Psoas muscle (tissue), 8 donors: ENCODE measurements at regions of chr7 and their contacts with region 1.

Region 1: GRCh38 chr7:92833024-92833765 is 3.2 kb downstream of the CDK6 start:
- DNase-seq: peak; percentile 79 to 86
- ATAC-seq: peak; percentile 72 to 79 (median 74)
- H3K4me3 ChIP-seq: peak overlapping the region; percentile 81
- H3K27ac ChIP-seq: peak overlapping the region; percentile 74
- H3K4me1 ChIP-seq: peaks cover 15% of the 10 kb centered on the region
- H3K27me3 ChIP-seq: peaks cover 0 to 64% (median 16%) of the 10 kb centered on the region in 3 donors
- CTCF ChIP-seq: peak; percentile 58

Region 2: GRCh38 chr7:92366730-92367129 is 466.5 kb before region 1 on chr7:
- intact Hi-C with region 1: no loop called
- DNase-seq: no peak
- ATAC-seq: no peak
- H3K4me3 ChIP-seq: no peak overlapping the region
- H3K27ac ChIP-seq: no peak overlapping the region
- H3K4me1 ChIP-seq: no peaks in the 10 kb centered on the region
- H3K27me3 ChIP-seq: no peaks in the 10 kb centered on the region
- CTCF ChIP-seq: no peak

Region 3: GRCh38 chr7:92614660-92615174 is 218.5 kb before region 1 on chr7:
- intact Hi-C with region 1: loop called in 1 of 2 experiments (anchors 5 kb)
- DNase-seq: no peak
- ATAC-seq: no peak
- H3K4me3 ChIP-seq: no peak overlapping the region
- H3K27ac ChIP-seq: no peak overlapping the region
- H3K4me1 ChIP-seq: no peaks in the 10 kb centered on the region
- H3K27me3 ChIP-seq: no peaks in the 10 kb centered on the region
- CTCF ChIP-seq: no peak

Region 4: GRCh38 chr7:92621026-92621540 is 212.1 kb before region 1 on chr7:
- intact Hi-C with region 1: loop called (anchors 5 kb)
- DNase-seq: peak; percentile 27 to 52
- ATAC-seq: peak; percentile 39 to 85 (median 70)
- H3K4me3 ChIP-seq: no peak overlapping the region
- H3K27ac ChIP-seq: peak overlapping the region; percentile 1
- H3K4me1 ChIP-seq: no peaks in the 10 kb centered on the region
- H3K27me3 ChIP-seq: no peaks in the 10 kb centered on the region
- CTCF ChIP-seq: peak; percentile 57

Region 5: DNA sequence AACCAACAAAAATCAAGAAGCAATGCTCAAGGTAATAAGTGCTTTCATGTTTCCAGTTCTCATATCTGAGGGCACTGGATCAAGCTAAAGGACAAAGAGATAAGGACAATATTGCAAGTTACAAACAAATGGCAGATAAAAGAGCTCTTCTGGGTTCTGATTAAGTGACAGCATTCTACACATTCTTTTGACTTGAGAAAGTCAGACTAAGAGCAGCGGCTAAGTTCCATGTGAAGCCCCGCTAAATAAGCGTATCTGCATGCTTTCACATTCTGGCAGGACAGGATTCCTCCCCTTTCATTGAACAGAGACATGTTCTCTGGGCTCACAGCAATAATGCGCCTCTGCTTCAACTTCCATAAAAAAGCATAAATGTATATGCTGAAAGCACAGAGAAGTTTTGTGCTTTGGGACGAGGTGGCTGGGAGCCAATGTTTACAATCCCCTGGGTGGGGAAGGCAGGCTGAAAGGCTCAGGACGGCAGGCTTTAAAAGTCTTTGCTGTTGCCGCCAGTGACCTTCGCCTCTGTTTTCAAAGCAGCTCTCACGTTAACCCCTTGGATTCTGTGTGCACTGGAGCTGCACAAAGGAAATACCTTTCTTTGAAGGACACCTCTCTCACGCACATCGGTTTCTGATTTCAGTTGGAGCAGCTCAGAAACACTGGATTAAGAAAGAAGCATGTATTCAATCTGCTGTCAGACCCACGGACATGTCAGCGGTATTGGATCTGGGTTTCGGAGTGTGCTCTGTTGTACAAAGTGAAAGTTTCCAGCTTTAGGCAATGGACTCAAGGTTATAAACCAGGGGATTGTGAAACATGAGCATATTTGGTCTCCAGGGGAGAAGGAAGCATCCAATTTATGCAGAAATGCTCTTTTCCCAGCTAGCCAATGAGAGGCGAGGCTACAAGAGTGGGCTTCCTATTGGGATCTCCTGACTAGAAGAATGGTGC is 137.6 kb before region 1 on chr7:
- intact Hi-C with region 1: loop called in 1 of 2 experiments (anchors 1 kb)
- DNase-seq: peak in 1 of 2 donors; percentile 13
- ATAC-seq: peak; percentile 23 to 60 (median 44)
- H3K4me3 ChIP-seq: peak overlapping the region; percentile 65
- H3K27ac ChIP-seq: peak overlapping the region; percentile 31
- H3K4me1 ChIP-seq: no peaks in the 10 kb centered on the region
- H3K27me3 ChIP-seq: no peaks in the 10 kb centered on the region
- CTCF ChIP-seq: no peak

Region 6: GRCh38 chr7:92720604-92721350 is 112.4 kb before region 1 on chr7:
- intact Hi-C with region 1: loop called in 1 of 2 experiments (anchors 5 kb)
- DNase-seq: no peak
- ATAC-seq: no peak
- H3K4me3 ChIP-seq: no peak overlapping the region
- H3K27ac ChIP-seq: no peak overlapping the region
- H3K4me1 ChIP-seq: peaks cover 5% of the 10 kb centered on the region
- H3K27me3 ChIP-seq: no peaks in the 10 kb centered on the region
- CTCF ChIP-seq: no peak

Region 7: DNA sequence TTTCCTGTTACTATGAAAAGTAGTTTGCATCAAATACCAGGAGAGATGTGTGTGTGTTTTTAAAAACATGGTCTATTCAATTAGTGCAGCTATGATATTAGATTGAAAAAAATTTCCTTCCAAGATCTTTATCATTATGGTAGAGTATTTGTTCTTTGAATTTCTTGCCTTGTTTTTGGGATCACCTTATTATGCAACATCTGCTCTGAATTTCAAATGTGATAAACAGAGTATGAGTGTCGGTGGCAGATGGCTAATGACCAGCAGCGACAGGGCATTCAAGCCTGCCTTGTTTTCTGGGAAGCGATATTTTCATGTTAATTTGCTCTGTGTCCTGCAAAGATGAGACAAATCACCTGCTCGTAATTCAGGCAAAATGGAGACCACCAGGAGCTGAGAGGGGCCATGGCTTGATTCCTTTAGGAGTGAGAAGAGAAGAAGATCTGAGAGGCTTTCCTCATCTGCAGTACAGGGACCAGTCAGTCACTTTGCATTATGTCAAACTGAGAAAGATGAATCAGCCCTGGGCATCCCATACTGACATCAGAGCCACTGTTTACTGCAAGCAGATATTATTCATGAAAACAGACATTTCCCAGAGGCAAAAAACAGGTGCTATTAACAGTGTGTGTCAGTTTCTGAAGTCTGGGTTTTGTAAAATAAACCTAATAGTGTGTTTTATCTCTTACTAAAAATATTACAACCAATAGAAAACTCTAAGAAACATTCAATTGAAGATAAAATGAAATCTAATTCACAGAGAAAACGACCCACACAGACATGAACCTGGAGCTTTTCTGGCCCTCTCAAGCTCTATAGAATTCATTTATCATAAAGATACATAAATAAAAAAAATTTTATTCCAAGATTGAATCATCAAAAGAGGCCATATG is 64.4 kb before region 1 on chr7:
- intact Hi-C with region 1: loop called in 1 of 2 experiments (anchors 2 kb)
- DNase-seq: no peak
- ATAC-seq: no peak
- H3K4me3 ChIP-seq: no peak overlapping the region
- H3K27ac ChIP-seq: no peak overlapping the region
- H3K4me1 ChIP-seq: no peaks in the 10 kb centered on the region
- H3K27me3 ChIP-seq: no peaks in the 10 kb centered on the region
- CTCF ChIP-seq: no peak

Region 8: GRCh38 chr7:92797693-92798092 is 35.5 kb before region 1 on chr7:
- intact Hi-C with region 1: no loop called
- DNase-seq: no peak
- ATAC-seq: no peak
- H3K4me3 ChIP-seq: no peak overlapping the region
- H3K27ac ChIP-seq: no peak overlapping the region
- H3K4me1 ChIP-seq: no peaks in the 10 kb centered on the region
- H3K27me3 ChIP-seq: no peaks in the 10 kb centered on the region
- CTCF ChIP-seq: no peak